HepG2 (cell line): ENCODE measurements at regions of chr22 and their contacts with region 1.

Region 1: GRCh38 chr22:36123673-36124630 is 36.6 kb downstream of the APOL3 start:
- DNase-seq: peak; percentile 93
- ATAC-seq: peak; percentile 89
- H3K4me3 ChIP-seq: peak overlapping the region; percentile 51 to 71 (median 55); a peak in 5 of 6 replicates
- H3K27ac ChIP-seq: peak overlapping the region; percentile 62
- H3K4me1 ChIP-seq: peaks cover 42% of the 10 kb centered on the region
- H3K27me3 ChIP-seq: 0 out of 5 replicates have a peak, but pooled peaks cover 0 to 1% of the 10 kb centered on the region in 2 experiments
- CTCF ChIP-seq: peak; percentile 100
- EP300 ChIP-seq: no peak
- POLR2A ChIP-seq: peak; percentile 51 to 56; a peak in 2 of 4 replicates
- RAD21 ChIP-seq: peak; percentile 99

Region 2: GRCh38 chr22:35749808-35750207 is 374.1 kb before region 1 on chr22:
- CTCF ChIA-PET with region 1: no interaction called
- POLR2A ChIA-PET with region 1: no interaction called
- in situ Hi-C with region 1: loop called (anchors 25 kb)
- intact Hi-C with region 1: no loop called
- DNase-seq: no peak
- ATAC-seq: no peak
- H3K4me3 ChIP-seq: no peak overlapping the region
- H3K27ac ChIP-seq: no peak overlapping the region
- H3K4me1 ChIP-seq: peaks cover 5% of the 10 kb centered on the region; the same call in 1 of the 2 replicates
- H3K27me3 ChIP-seq: no peaks in the 10 kb centered on the region
- CTCF ChIP-seq: no peak
- EP300 ChIP-seq: no peak
- POLR2A ChIP-seq: no peak
- RAD21 ChIP-seq: no peak

Region 3: DNA sequence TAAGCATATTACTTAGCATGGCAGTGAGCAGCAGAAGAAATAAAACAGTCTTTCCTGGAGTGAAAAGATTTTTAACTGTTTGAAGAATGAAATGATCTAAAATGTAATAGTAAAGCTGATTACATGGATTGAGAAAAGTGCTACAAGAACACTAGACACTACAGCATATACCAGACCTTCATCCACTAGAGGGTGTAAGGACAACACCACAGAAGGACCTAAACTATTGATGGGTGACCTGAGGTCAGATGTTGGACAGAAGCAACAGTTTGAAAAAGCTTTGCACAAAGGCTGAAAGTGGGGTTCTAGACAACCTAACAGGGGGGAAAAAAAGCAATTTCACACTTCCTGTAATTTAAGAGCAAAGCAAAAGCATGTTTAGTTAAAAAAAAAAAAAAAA is 193.0 kb before region 1 on chr22:
- CTCF ChIA-PET with region 1: interaction called, 11 read pairs
- POLR2A ChIA-PET with region 1: no interaction called
- in situ Hi-C with region 1: loop called (anchors 5 kb)
- intact Hi-C with region 1: loop called (anchors 1 kb)
- DNase-seq: peak; percentile 78
- ATAC-seq: peak; percentile 90
- H3K4me3 ChIP-seq: no peak overlapping the region
- H3K27ac ChIP-seq: no peak overlapping the region
- H3K4me1 ChIP-seq: no peaks in the 10 kb centered on the region
- H3K27me3 ChIP-seq: no peaks in the 10 kb centered on the region
- CTCF ChIP-seq: peak; percentile 85
- EP300 ChIP-seq: no peak
- POLR2A ChIP-seq: no peak
- RAD21 ChIP-seq: peak; percentile 73; the same call in 1 of the 2 replicates

Region 4: DNA sequence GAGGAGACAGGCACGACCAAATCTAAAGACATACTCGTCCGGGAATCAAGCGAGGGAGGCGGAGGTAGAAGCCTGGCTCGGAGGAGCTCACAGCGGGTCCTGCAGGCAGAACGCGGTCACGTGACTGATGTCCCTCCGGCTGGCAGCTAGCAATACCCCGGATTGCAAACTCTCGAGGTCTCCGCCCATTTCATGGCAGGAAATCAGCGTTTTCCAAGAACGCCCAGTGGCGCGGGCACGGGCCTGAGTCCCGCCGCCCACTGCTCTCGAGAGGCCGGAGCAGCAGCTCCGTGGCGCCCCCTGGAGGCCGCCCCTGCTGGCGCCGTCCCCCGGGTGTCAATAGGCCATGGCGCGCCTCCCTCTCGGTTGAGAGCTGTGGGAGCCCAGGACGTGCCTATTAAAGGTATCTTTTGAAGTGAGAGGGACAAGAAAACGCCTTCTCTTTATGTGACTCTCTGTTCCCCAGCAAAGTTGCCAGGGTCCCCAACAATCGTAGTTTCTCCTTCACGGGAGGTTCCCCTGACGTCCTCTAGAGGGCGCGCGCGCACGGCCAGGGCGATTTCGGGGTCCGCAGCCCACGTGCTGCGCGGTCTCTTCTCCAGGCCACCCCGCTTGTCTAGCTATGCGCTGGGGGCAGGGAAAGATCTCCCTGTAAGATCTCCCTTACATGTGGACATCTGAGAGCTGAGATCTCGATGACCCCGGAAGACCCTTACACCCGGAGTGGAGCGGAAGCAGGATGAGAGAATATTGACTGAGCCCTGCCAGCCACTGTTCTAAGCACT is 58.0 kb before region 1 on chr22:
- CTCF ChIA-PET with region 1: interaction called, 16 read pairs
- POLR2A ChIA-PET with region 1: interaction called, 8 read pairs
- in situ Hi-C with region 1: no loop called
- intact Hi-C with region 1: loop called (anchors 2 kb)
- DNase-seq: peak; percentile 85
- ATAC-seq: peak; percentile 90
- H3K4me3 ChIP-seq: peak overlapping the region; percentile 46 to 75 (median 61)
- H3K27ac ChIP-seq: peak overlapping the region; percentile 48
- H3K4me1 ChIP-seq: peaks cover 15% of the 10 kb centered on the region
- H3K27me3 ChIP-seq: no peaks in the 10 kb centered on the region
- CTCF ChIP-seq: peak; percentile 91
- EP300 ChIP-seq: no peak
- POLR2A ChIP-seq: peak; percentile 54 to 68
- RAD21 ChIP-seq: peak; percentile 90

Region 5: DNA sequence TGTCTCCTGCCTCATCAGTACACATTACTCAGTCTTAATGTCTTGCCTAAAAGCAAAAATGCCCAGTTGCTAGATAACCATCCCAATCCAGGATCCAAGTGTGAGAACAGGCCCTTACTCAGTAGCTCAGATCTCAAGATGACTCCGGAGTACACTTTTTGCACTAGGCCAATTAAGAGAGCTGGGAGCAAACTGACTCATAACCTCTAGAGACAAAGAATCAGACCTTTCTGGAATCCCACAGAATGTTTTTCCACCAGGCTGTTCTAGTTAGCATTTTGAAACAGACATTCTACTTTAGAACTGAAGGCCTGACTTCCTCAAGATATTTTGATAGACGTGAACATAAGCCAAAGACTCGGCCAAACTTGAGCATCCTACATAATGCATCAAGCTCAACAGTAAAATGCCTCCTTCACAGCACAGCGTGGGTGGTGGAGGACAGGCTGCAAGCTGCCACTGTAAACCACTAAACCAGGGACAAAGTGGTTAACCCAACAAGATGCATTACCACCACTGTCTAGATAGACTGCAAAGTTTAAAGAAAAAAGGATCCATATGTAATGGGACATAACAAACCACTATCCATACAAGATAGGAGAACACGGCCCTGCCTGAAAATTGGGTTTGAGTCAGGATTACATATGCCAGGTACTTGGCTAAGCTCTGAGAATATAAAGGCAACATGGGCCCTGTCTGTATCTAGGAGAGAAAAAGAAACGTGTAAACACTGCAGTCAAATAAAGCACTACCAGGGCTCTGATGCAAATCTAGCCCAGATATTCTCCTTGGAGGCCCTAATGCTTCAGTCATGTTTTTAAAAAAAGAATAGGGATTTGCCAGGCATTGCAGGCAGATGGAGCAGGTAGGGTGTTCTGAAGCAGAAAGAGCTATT is 215.5 kb after region 1 on chr22:
- CTCF ChIA-PET with region 1: no interaction called
- POLR2A ChIA-PET with region 1: no interaction called
- in situ Hi-C with region 1: no loop called
- intact Hi-C with region 1: no loop called
- DNase-seq: no peak
- ATAC-seq: no peak
- H3K4me3 ChIP-seq: no peak overlapping the region
- H3K27ac ChIP-seq: no peak overlapping the region
- H3K4me1 ChIP-seq: peaks cover 57% of the 10 kb centered on the region
- H3K27me3 ChIP-seq: no peaks in the 10 kb centered on the region
- CTCF ChIP-seq: no peak
- EP300 ChIP-seq: no peak
- POLR2A ChIP-seq: no peak
- RAD21 ChIP-seq: no peak